B cell (primary cell): ENCODE measurements at regions of chr10 and their contacts with region 1.

Region 1: DNA sequence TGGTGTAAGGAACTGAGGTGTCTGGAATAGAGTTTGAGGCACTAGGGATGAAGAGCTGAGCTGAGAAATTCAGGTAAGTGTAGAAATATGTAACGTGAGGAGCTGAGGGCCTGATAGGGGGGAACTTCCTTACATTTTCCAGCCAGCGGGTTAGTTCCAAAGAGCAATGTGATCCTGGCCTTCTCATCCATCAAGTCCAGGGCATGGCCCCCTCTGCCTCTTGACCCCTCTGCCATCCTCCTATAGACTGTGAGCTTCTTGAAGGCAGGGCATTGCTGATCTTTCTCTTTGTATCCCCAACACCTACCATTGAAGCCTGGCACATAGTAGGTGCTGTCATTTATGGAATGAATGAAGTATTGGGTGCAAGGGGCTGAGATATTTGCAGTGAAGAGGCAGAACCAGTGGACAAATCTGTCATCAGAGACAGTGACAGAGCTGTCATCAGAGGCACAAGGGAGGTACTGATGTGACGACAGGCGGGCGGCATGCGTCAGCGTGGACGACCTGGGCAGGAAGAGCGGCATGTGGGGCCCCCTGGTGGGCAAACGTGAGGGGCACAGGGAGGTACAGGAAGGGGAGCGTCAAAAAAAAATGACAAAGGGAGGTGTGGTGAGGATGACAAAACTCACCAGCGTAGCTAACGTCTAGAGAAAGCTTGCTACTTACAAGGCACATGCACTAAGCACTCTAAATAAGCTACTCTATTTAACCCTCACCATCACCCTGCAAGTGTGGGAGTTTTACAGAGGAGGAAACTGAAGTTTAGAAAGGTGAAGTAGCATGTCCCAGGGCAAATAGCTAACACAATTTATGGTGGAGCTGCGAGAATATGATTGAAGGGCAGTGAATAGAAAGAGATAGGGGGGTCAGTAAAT is 5.2 kb upstream of the CAMK2G start:
- DNase-seq: peak; percentile 97
- ATAC-seq: peak; percentile 93
- H3K4me3 ChIP-seq: no peak overlapping the region
- H3K4me3 Mint-ChIP-seq: no peak overlapping the region
- H3K27ac ChIP-seq: peak overlapping the region; percentile 2 to 39
- H3K27ac Mint-ChIP-seq: peak overlapping the region; percentile 8
- H3K4me1 ChIP-seq: peaks cover 13 to 26% of the 10 kb centered on the region in 2 donors
- H3K4me1 Mint-ChIP-seq: peaks cover 21% of the 10 kb centered on the region
- H3K27me3 ChIP-seq: no peaks in the 10 kb centered on the region
- H3K27me3 Mint-ChIP-seq: no peaks in the 10 kb centered on the region
- CTCF ChIP-seq: peak; percentile 91

Region 2: GRCh38 chr10:73517271-73517877 is 362.2 kb before region 1 on chr10:
- CTCF ChIA-PET with region 1: no interaction called
- POLR2A ChIA-PET with region 1: no interaction called
- intact Hi-C with region 1: no loop called
- DNase-seq: no peak
- ATAC-seq: no peak
- H3K4me3 ChIP-seq: no peak overlapping the region
- H3K4me3 Mint-ChIP-seq: no peak overlapping the region
- H3K27ac ChIP-seq: no peak overlapping the region
- H3K27ac Mint-ChIP-seq: no peak overlapping the region
- H3K4me1 ChIP-seq: no peaks in the 10 kb centered on the region
- H3K4me1 Mint-ChIP-seq: no peaks in the 10 kb centered on the region
- H3K27me3 ChIP-seq: no peaks in the 10 kb centered on the region
- H3K27me3 Mint-ChIP-seq: no peaks in the 10 kb centered on the region
- CTCF ChIP-seq: no peak

Region 3: DNA sequence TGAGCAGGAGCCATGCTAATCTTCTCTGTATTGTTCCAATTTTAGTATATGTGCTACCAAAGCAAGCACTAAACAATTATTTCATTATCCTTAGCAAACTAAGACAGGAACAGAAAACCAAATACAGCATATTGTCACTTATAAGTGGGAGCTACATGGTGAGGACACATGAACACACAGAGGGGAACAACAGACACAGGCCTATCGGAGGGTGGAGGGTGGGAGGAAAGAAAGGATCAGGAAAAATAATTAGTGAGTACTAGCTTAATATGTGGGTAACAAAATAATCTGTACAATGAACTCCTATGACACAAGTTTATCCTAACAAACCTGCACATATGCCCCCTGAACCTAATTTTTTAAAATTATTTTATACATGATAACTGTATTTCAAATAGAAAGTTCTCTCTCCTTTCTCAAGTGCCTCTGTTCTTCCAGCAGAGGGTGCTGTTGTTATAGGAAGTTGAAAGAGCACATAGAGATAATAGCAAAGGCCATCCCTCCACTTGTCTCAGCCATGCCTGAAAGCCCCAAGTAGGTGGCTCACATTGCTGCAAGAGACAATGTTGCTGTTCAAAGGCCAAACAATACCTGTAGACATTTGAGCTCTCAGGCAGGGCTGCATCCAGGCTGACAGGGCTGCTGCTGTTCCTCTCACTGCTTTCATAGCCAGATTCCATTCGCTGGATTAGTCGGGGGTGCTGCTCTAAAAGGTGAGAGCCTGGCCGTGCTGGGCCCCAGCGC is 350.3 kb before region 1 on chr10:
- CTCF ChIA-PET with region 1: interaction called, 4 read pairs
- POLR2A ChIA-PET with region 1: no interaction called
- intact Hi-C with region 1: loop called (anchors 1 kb)
- DNase-seq: peak; percentile 79
- ATAC-seq: peak; percentile 88
- H3K4me3 ChIP-seq: no peak overlapping the region
- H3K4me3 Mint-ChIP-seq: no peak overlapping the region
- H3K27ac ChIP-seq: no peak overlapping the region
- H3K27ac Mint-ChIP-seq: no peak overlapping the region
- H3K4me1 ChIP-seq: no peaks in the 10 kb centered on the region
- H3K4me1 Mint-ChIP-seq: no peaks in the 10 kb centered on the region
- H3K27me3 ChIP-seq: no peaks in the 10 kb centered on the region
- H3K27me3 Mint-ChIP-seq: no peaks in the 10 kb centered on the region
- CTCF ChIP-seq: peak; percentile 90

Region 4: DNA sequence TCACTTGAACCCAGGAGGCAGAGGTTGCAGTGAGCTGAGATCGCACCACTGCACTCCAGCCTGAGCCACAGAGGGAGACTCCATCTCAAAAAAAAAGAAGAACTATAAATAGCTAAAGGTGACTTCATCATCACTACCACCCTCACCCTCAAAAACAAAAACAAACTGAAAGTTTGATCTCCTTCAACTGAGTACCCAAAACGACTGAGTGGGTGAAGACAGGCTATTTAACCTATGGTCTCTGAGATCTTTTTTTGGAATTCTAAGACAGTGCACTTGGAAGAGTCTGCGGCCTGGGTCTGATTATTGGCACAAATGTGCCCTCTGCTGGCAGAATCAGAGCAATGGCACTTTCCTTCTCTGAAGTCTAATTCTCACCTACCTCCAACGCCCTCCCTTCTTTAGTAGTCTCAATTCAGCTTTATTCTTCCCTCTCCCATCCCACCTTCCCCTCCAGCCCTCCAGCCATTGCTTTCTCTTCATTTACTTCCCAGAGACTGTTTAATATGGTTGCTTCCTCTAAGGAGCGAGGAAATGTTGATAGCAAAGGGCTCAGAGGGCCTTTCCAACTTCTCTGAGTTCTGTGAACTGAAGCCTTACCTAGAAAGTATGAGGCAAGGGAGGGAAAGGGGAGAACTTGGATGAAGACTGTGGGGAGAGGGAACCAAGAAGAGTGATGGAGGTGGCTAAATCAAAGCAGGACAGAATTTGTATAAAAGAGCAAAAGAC is 235.4 kb before region 1 on chr10:
- CTCF ChIA-PET with region 1: no interaction called
- POLR2A ChIA-PET with region 1: no interaction called
- intact Hi-C with region 1: no loop called
- DNase-seq: peak; percentile 79
- ATAC-seq: peak; percentile 65
- H3K4me3 ChIP-seq: no peak overlapping the region
- H3K4me3 Mint-ChIP-seq: peak overlapping the region; percentile 75
- H3K27ac ChIP-seq: no peak overlapping the region
- H3K27ac Mint-ChIP-seq: peak overlapping the region; percentile 37
- H3K4me1 ChIP-seq: peaks cover 10 to 28% of the 10 kb centered on the region in 2 donors
- H3K4me1 Mint-ChIP-seq: peaks cover 22% of the 10 kb centered on the region
- H3K27me3 ChIP-seq: peaks cover 0 to 10% (median 0%) of the 10 kb centered on the region in 4 experiments
- H3K27me3 Mint-ChIP-seq: peaks cover 8% of the 10 kb centered on the region
- CTCF ChIP-seq: peak; percentile 89

Region 5: DNA sequence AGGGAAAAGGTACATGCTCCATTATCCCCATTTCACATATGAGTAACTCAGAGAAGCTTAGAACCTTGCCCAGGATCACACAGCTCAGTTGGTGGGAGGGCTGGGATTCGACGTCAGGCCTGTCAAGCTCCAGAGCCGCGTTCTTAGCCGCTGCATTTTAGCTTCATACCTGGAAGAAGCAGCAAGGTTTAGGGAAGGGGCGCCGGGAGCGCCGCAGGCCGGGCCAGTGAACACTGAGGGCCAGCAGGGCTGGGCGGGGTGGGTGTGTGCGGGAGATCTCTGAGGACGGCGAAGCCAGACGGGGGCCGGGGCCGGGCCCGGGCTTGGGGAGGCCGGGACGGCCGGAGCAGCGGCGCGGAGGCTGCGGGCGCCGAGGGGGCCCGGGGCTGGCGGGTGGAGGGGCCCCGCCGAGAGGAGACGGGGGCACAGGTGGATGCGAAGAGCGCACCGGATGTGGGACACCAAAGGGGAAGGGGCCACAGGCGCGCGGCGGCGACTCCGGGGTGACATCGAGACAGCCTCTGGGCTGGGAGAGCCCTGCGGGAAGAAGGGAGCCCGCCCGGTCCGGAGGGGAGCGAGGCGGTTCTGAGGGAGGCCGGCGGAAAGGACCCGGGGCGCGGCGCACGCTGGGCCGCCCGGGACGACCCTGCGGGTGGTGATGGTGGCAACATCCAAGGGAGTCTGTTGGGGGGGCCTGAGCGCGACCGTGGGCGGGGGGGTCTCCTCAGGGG is 68.6 kb before region 1 on chr10:
- CTCF ChIA-PET with region 1: interaction called, 13 read pairs
- POLR2A ChIA-PET with region 1: no interaction called
- intact Hi-C with region 1: loop called (anchors 1 kb)
- DNase-seq: no peak
- ATAC-seq: peak; percentile 7
- H3K4me3 ChIP-seq: peak overlapping the region; percentile 58 to 83 (median 76)
- H3K4me3 Mint-ChIP-seq: peak overlapping the region; percentile 88
- H3K27ac ChIP-seq: peak overlapping the region; percentile 52 to 94
- H3K27ac Mint-ChIP-seq: peak overlapping the region; percentile 93
- H3K4me1 ChIP-seq: peaks cover 4 to 26% of the 10 kb centered on the region in 2 donors
- H3K4me1 Mint-ChIP-seq: peaks cover 33% of the 10 kb centered on the region
- H3K27me3 ChIP-seq: no peaks in the 10 kb centered on the region
- H3K27me3 Mint-ChIP-seq: no peaks in the 10 kb centered on the region
- CTCF ChIP-seq: no peak

Region 6: DNA sequence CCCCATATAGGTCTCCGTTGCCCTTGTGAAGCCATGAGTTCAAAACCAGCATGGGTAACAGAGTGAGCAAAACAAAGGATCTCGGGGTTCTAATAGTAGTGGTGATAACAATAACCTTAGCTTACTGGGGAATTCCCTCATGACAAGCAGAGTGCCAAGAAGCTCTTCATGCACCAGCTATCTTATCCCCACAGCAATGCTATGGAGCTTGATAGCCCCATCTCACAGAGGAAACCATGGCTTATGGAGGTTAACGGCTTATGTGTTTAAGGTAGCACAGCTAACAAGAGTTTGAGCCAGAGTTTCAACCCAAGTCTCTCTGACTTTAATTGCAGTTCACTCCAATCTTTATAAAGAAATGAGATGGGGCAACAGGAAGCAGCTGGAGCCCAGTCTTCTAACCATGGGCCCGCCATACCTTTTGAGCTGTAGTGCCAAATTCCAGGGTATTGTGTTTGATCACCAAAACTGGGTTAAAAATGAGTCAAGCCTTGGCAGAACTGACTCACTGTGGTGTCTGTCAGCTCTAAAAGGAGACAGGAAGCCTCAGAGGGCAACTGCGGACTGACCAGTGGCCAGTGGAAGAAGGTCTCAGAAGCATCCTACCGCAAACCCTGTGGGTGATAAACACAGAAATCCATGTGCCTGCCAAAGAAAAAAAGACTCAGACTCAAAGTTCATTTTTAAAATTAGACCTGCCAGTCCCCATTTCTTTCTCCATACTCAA is 14.9 kb after region 1 on chr10:
- CTCF ChIA-PET with region 1: interaction called, 32 read pairs
- POLR2A ChIA-PET with region 1: no interaction called
- intact Hi-C with region 1: no loop called
- DNase-seq: no peak
- ATAC-seq: no peak
- H3K4me3 ChIP-seq: no peak overlapping the region
- H3K4me3 Mint-ChIP-seq: no peak overlapping the region
- H3K27ac ChIP-seq: no peak overlapping the region
- H3K27ac Mint-ChIP-seq: no peak overlapping the region
- H3K4me1 ChIP-seq: peaks cover 0 to 8% of the 10 kb centered on the region in 2 donors
- H3K4me1 Mint-ChIP-seq: peaks cover 1% of the 10 kb centered on the region
- H3K27me3 ChIP-seq: peaks cover 0 to 4% (median 0%) of the 10 kb centered on the region in 4 experiments
- H3K27me3 Mint-ChIP-seq: no peaks in the 10 kb centered on the region
- CTCF ChIP-seq: no peak

Region 7: GRCh38 chr10:73906524-73907447 is 27.3 kb after region 1 on chr10:
- CTCF ChIA-PET with region 1: no interaction called
- POLR2A ChIA-PET with region 1: no interaction called
- intact Hi-C with region 1: no loop called
- DNase-seq: no peak
- ATAC-seq: no peak
- H3K4me3 ChIP-seq: no peak overlapping the region
- H3K4me3 Mint-ChIP-seq: no peak overlapping the region
- H3K27ac ChIP-seq: no peak overlapping the region
- H3K27ac Mint-ChIP-seq: no peak overlapping the region
- H3K4me1 ChIP-seq: peaks cover 20 to 31% of the 10 kb centered on the region in 2 donors
- H3K4me1 Mint-ChIP-seq: peaks cover 31% of the 10 kb centered on the region
- H3K27me3 ChIP-seq: peaks cover 0 to 39% (median 23%) of the 10 kb centered on the region in 4 experiments
- H3K27me3 Mint-ChIP-seq: peaks cover 32% of the 10 kb centered on the region
- CTCF ChIP-seq: no peak

Region 8: GRCh38 chr10:73956476-73957359 is 77.2 kb after region 1 on chr10:
- CTCF ChIA-PET with region 1: interaction called, 12 read pairs
- POLR2A ChIA-PET with region 1: interaction called, 6 read pairs
- intact Hi-C with region 1: no loop called
- DNase-seq: peak; percentile 82
- ATAC-seq: peak; percentile 61
- H3K4me3 ChIP-seq: peak overlapping the region; percentile 13 to 42 (median 24)
- H3K4me3 Mint-ChIP-seq: peak overlapping the region; percentile 83
- H3K27ac ChIP-seq: peak overlapping the region; percentile 92 to 93
- H3K27ac Mint-ChIP-seq: peak overlapping the region; percentile 99
- H3K4me1 ChIP-seq: peaks cover 50 to 54% of the 10 kb centered on the region in 2 donors
- H3K4me1 Mint-ChIP-seq: peaks cover 56% of the 10 kb centered on the region
- H3K27me3 ChIP-seq: no peaks in the 10 kb centered on the region
- H3K27me3 Mint-ChIP-seq: no peaks in the 10 kb centered on the region
- CTCF ChIP-seq: no peak

Region 9: GRCh38 chr10:74081192-74081803 is 201.8 kb after region 1 on chr10:
- CTCF ChIA-PET with region 1: interaction called, 219 read pairs
- POLR2A ChIA-PET with region 1: no interaction called
- intact Hi-C with region 1: no loop called
- DNase-seq: peak; percentile 66
- ATAC-seq: peak; percentile 50
- H3K4me3 ChIP-seq: no peak overlapping the region
- H3K4me3 Mint-ChIP-seq: no peak overlapping the region
- H3K27ac ChIP-seq: no peak overlapping the region
- H3K27ac Mint-ChIP-seq: no peak overlapping the region
- H3K4me1 ChIP-seq: peaks cover 18 to 20% of the 10 kb centered on the region in 2 donors
- H3K4me1 Mint-ChIP-seq: peaks cover 37% of the 10 kb centered on the region
- H3K27me3 ChIP-seq: no peaks in the 10 kb centered on the region
- H3K27me3 Mint-ChIP-seq: no peaks in the 10 kb centered on the region
- CTCF ChIP-seq: peak; percentile 71